Lower leg skin (tissue), 4 donors: ENCODE measurements at regions of chr17 and their contacts with region 1.

Region 1: GRCh38 chr17:7329374-7329996 is 350 bp upstream of the NEURL4 start:
- DNase-seq: peak; percentile 98 to 100
- H3K4me3 ChIP-seq: peak overlapping the region; percentile 66
- CTCF ChIP-seq: no peak
- POLR2A ChIP-seq: peak in 1 of 2 donors; percentile 61

Region 2: DNA sequence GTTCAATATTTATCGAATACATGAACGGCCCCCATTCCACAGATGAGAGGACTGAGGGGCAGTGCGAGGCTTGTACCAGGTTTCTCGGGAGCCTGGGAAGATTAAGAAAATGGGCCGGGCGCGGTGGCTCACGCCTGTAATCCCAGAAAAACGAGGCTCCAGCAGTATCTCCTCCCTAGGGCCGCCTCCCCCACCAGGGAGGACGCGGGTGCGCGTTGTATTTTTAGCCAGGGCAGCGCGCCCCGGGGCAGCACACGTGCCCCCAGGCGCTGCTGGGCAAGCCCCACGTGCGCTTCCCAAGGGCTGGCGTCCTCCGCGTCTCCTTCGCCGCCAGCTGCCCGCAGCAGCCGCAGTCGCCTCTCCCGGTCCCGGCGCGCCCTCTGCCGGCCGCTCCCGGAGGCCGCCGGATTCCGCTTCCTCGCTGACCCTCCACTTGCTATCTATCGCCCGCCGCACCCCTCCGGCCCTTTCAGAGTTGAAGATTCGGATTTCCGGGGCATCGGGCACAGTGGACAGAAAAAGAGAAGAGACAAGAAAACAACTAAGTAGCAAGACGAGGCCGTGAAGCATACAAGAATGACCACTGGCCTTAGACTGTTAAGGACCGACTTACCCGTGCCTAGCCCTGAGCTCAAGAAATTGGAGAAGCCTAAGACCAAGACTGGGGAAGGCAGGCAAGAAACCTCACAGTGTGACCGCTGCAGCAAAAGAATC is 33.1 kb before region 1 on chr17:
- intact Hi-C with region 1: loop called (anchors 1 kb)
- DNase-seq: peak; percentile 69 to 96
- H3K4me3 ChIP-seq: no peak overlapping the region
- CTCF ChIP-seq: peak in 1 of 3 donors; percentile 72
- POLR2A ChIP-seq: no peak

Region 3: GRCh38 chr17:7403977-7404736 is 74.7 kb after region 1 on chr17 and contains the start of gene TMEM256:
- intact Hi-C with region 1: loop called (anchors 2 kb)
- DNase-seq: peak; percentile 99 to 100
- H3K4me3 ChIP-seq: peak within 1 kb of the TSS; percentile 44
- CTCF ChIP-seq: no peak
- POLR2A ChIP-seq: peak in 1 of 2 donors; percentile 60
- total RNA-seq, gene TMEM256: 56.1 to 90.8 (median 65.5) TPM

Region 4: GRCh38 chr17:7523033-7523432 is 193.5 kb after region 1 on chr17:
- intact Hi-C with region 1: no loop called
- DNase-seq: no peak
- H3K4me3 ChIP-seq: no peak overlapping the region
- CTCF ChIP-seq: no peak
- POLR2A ChIP-seq: no peak